ENCODE measurements at regions of chr4 and their contacts with region 1.

Region 1: GRCh38 chr4:85147439-85148076 is 181.1 kb upstream of the WDFY3 start:
- DNase-seq: peak; percentile 71
- H3K4me3 ChIP-seq: peak overlapping the region in 1 of 8 donors; percentile 46
- H3K27ac ChIP-seq: no peak overlapping the region
- H3K4me1 ChIP-seq: peaks cover 0 to 8% (median 3%) of the 10 kb centered on the region in 6 donors
- H3K27me3 ChIP-seq: no peaks in the 10 kb centered on the region
- CTCF ChIP-seq: peak; percentile 25 to 67 (median 61)
- POLR2A ChIP-seq: no peak

Region 2: GRCh38 chr4:85369701-85370380 is 222.3 kb after region 1 on chr4:
- intact Hi-C with region 1: loop called (anchors 10 kb)
- DNase-seq: no peak
- H3K4me3 ChIP-seq: no peak overlapping the region
- H3K27ac ChIP-seq: peak overlapping the region in 2 of 8 donors; percentile 53 to 59
- H3K4me1 ChIP-seq: peaks cover 0 to 26% (median 10%) of the 10 kb centered on the region in 6 donors
- H3K27me3 ChIP-seq: no peaks in the 10 kb centered on the region
- CTCF ChIP-seq: no peak
- POLR2A ChIP-seq: no peak

Region 3: GRCh38 chr4:85747882-85748491 is 600.4 kb after region 1 on chr4:
- intact Hi-C with region 1: loop called (anchors 5 kb)
- DNase-seq: no peak
- H3K4me3 ChIP-seq: no peak overlapping the region
- H3K27ac ChIP-seq: peak overlapping the region in 1 of 8 donors; percentile 16
- H3K4me1 ChIP-seq: peaks cover under 1 to 81% (median 41%) of the 10 kb centered on the region in 6 donors
- H3K27me3 ChIP-seq: no peaks in the 10 kb centered on the region
- CTCF ChIP-seq: peak; percentile 61 to 87 (median 83)
- POLR2A ChIP-seq: no peak

Region 4: GRCh38 chr4:85968945-85969819 is 821.6 kb after region 1 on chr4:
- intact Hi-C with region 1: loop called (anchors 10 kb)
- DNase-seq: no peak
- H3K4me3 ChIP-seq: no peak overlapping the region
- H3K27ac ChIP-seq: peak overlapping the region in 2 of 8 donors; percentile 26 to 41
- H3K4me1 ChIP-seq: peaks cover 2 to 49% (median 29%) of the 10 kb centered on the region in 6 donors
- H3K27me3 ChIP-seq: no peaks in the 10 kb centered on the region
- CTCF ChIP-seq: peak in 10 of 11 experiments; percentile 15 to 63 (median 48)
- POLR2A ChIP-seq: no peak

Region 5: GRCh38 chr4:86043755-86044592 is 896.4 kb after region 1 on chr4:
- intact Hi-C with region 1: loop called (anchors 10 kb)
- DNase-seq: no peak
- H3K4me3 ChIP-seq: no peak overlapping the region
- H3K27ac ChIP-seq: no peak overlapping the region
- H3K4me1 ChIP-seq: peaks cover 0 to 9% (median 4%) of the 10 kb centered on the region in 6 donors
- H3K27me3 ChIP-seq: no peaks in the 10 kb centered on the region
- CTCF ChIP-seq: peak in 10 of 11 experiments; percentile 26 to 71 (median 57)
- POLR2A ChIP-seq: no peak

Measured in spleen (tissue), 13 donors.